Transverse colon (tissue), 4 donors: ENCODE measurements at regions of chr10 and their contacts with region 1.

Region 1: DNA sequence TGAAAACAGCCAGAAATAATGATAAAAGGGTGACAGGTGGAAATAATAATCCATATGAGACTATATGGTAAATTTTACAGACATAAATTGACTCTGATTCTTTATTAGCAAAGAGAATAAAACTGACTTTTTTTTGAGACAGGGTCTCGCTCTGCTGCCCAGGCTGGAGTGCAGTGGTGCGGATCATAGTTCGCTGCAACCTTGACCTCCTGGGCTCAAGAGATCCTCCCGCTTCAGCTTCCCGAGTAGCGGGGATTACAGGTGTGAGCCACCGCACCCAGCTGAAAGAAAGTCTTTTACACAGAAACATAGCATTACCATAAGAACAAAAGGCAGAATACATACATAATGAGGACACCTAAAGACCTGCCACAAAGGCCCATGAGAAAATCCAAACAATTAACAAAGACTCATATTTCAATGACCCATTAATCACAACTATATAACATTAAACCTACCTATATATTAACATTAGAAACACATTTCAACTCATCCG is 51.5 kb upstream of the DIP2C start:
- DNase-seq: no peak
- H3K4me3 ChIP-seq: no peak overlapping the region
- H3K27ac ChIP-seq: no peak overlapping the region
- H3K4me1 ChIP-seq: no peaks in the 10 kb centered on the region
- H3K27me3 ChIP-seq: no peaks in the 10 kb centered on the region
- CTCF ChIP-seq: no peak
- EP300 ChIP-seq: no peak
- POLR2A ChIP-seq: no peak

Region 2: DNA sequence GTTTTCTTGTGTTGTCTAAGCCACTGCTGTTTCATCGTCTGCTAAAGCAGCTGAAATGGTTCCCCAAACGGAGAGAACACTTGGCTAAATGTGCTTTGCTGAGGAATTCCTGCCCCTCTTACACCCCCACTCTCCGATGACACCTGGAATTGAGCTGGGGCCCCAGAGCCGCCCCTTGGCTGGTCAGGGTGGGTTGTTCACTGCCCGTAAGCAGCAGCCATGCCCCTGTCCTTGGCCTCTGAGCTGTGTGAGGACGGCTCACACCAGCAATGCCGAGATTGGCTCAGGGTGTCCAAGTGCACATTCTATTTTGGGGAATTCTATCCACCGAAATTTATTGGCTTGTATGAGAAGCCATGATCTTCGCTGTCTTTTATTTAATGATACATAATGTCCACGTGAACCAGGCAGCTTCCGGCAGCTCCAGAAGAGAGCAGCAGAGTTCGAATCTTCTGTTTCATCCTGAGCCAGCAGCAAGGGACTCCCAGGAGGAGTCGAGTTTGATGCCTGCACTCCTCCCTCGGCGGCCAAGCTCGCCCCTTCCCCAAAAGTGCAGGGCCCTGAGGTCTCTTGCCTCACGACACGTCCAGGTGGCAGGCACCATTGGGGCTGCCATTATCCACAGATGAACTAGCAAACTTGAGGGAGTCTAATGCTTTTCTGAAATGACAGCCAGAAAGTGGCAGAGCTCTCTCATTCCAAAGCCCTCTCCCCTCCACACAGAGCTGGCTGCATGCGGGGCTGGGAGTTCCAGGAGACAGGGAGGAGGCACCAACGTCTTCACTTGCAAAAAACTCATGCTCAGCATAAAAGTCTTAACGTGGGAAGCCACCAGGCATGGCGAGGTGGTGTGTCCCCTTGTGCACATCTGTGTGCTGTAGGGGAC is 429.2 kb after region 1 on chr10:
- in situ Hi-C with region 1: no loop called
- intact Hi-C with region 1: loop called (anchors 10 kb)
- DNase-seq: no peak
- H3K4me3 ChIP-seq: no peak overlapping the region
- H3K27ac ChIP-seq: no peak overlapping the region
- H3K4me1 ChIP-seq: no peaks in the 10 kb centered on the region
- H3K27me3 ChIP-seq: no peaks in the 10 kb centered on the region
- CTCF ChIP-seq: no peak
- EP300 ChIP-seq: no peak
- POLR2A ChIP-seq: no peak